IMR-90 (cell line): ENCODE measurements at regions of chr4 and their contacts with region 1.

Region 1: GRCh38 chr4:40976343-40976742 is 226.6 kb downstream of the NSUN7 start:
- DNase-seq: peak; percentile 70
- ATAC-seq: peak; percentile 31; the same call in 1 of the 2 replicates
- H3K4me3 ChIP-seq: no peak overlapping the region
- H3K27ac ChIP-seq: peak overlapping the region; percentile 13; the same call in 1 of the 2 replicates
- H3K4me1 ChIP-seq: peaks cover 21% of the 10 kb centered on the region
- H3K27me3 ChIP-seq: no peaks in the 10 kb centered on the region
- CTCF ChIP-seq: peak; percentile 67
- POLR2A ChIP-seq: no peak
- RAD21 ChIP-seq: peak; percentile 73

Region 2: DNA sequence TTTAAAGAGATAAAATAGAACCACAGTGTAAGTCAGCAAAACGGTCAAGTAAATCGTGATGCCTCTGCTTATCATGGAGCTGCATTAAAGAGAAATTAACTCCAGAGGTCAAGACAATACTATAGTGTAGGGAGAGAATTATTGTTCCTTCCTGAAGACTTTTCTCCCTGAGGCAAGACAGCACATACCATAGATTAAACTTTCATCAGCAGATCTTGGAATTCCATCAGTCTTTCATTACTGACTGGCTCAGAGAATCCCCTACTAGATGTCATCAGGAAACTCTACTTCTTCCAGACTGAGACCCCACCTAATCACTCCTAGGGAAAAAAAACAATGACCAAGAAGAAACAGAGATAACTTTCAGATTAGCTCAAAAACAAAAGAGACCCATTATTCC is 95.2 kb before region 1 on chr4:
- CTCF ChIA-PET with region 1: no interaction called
- POLR2A ChIA-PET with region 1: no interaction called
- dilution Hi-C with region 1: no loop called
- in situ Hi-C with region 1: no loop called
- intact Hi-C with region 1: no loop called
- DNase-seq: no peak
- ATAC-seq: no peak
- H3K4me3 ChIP-seq: no peak overlapping the region
- H3K27ac ChIP-seq: no peak overlapping the region
- H3K4me1 ChIP-seq: no peaks in the 10 kb centered on the region
- H3K27me3 ChIP-seq: no peaks in the 10 kb centered on the region
- CTCF ChIP-seq: no peak
- POLR2A ChIP-seq: no peak
- RAD21 ChIP-seq: no peak

Region 3: DNA sequence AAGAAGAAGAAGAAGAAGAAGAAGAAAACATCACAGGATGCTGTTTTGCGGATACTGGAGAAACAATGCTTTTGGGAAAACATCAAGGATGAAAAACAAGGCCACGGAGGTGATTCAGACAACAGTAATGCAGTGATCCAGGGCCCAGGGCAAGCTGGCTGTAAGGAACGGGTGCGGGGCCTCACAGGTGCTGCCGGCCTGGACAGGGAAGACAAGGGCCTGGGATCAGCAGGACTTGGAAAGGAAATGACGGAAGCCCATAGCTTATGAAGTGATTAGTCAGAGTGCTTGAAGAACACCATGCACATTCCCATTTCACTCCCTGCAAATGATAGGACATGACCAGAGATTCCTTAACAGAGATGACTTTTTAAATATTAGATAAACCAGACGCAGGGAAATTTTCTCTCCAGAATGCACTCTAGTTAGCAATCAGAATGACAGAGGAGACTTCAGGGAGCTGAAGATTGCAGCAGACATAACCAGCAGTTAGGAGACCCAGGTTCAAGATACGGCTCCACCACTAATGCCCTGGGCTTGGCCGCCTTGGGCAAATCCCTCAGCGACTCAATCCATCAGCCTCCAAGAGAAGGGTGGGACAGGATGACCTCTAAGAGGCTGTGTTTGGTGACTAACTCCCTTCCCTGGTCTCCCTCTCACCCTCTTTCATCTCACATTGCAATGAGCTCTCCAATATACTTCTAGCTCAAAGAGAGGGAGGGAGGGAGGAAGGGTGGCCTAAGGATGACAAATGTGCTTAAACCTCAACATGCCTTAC is 183.9 kb after region 1 on chr4:
- CTCF ChIA-PET with region 1: interaction called, 4 read pairs
- POLR2A ChIA-PET with region 1: no interaction called
- dilution Hi-C with region 1: no loop called
- in situ Hi-C with region 1: no loop called
- intact Hi-C with region 1: loop called (anchors 5 kb)
- DNase-seq: peak; percentile 96
- ATAC-seq: peak; percentile 77
- H3K4me3 ChIP-seq: no peak overlapping the region
- H3K27ac ChIP-seq: no peak overlapping the region
- H3K4me1 ChIP-seq: peaks cover 16% of the 10 kb centered on the region
- H3K27me3 ChIP-seq: no peaks in the 10 kb centered on the region
- CTCF ChIP-seq: no peak
- POLR2A ChIP-seq: no peak
- RAD21 ChIP-seq: no peak

Region 4: GRCh38 chr4:41257257-41257901 is 281.0 kb after region 1 on chr4:
- CTCF ChIA-PET with region 1: interaction called, 4 read pairs
- POLR2A ChIA-PET with region 1: no interaction called
- dilution Hi-C with region 1: no loop called
- in situ Hi-C with region 1: no loop called
- intact Hi-C with region 1: loop called (anchors 5 kb)
- DNase-seq: peak; percentile 52
- ATAC-seq: peak; percentile 69
- H3K4me3 ChIP-seq: peak overlapping the region; percentile 94
- H3K27ac ChIP-seq: peak overlapping the region; percentile 84
- H3K4me1 ChIP-seq: peaks cover 4% of the 10 kb centered on the region
- H3K27me3 ChIP-seq: no peaks in the 10 kb centered on the region
- CTCF ChIP-seq: no peak
- POLR2A ChIP-seq: no peak
- RAD21 ChIP-seq: no peak